SK-N-SH (cell line): ENCODE measurements at regions of chr2 and their contacts with region 1.

Region 1: GRCh38 chr2:74458132-74458925 is at the start of gene WBP1:
- DNase-seq: peak; percentile 94
- H3K4me3 ChIP-seq: peak within 1 kb of the TSS; percentile 73 to 98
- H3K27ac ChIP-seq: peak within 1 kb of the TSS; percentile 69 to 99; a peak in 3 of 4 replicates
- H3K4me1 ChIP-seq: peaks cover 14 to 35% of the 10 kb centered on the region in 2 experiments; a peak in 3 of 4 replicates
- H3K27me3 ChIP-seq: no peaks in the 10 kb centered on the region
- CTCF ChIP-seq: no peak
- EP300 ChIP-seq: no peak
- RAD21 ChIP-seq: no peak
- polyA plus RNA-seq, gene WBP1: 184 and 193 TPM in 2 replicates

Region 2: DNA sequence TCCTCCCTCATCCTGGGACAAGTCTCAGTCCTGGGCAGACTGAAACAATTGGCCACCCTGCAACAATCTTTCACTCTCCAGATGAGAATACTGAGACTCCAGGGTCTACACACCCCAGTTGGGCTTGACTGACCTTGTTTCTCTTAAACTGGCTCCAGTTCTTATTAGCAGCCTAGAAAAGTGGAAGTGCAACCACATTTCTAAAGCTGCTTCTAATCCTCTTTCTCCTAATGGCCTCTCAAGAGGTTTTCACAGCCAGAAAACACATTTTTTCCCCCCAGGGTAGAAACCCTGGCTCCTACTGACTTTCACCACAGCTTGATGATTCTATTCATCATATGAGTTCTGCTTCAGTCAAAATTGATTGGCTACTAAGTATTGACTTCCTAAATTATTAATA is 160.9 kb before region 1 on chr2:
- CTCF ChIA-PET with region 1: no interaction called
- POLR2A ChIA-PET with region 1: no interaction called
- DNase-seq: no peak
- H3K4me3 ChIP-seq: no peak overlapping the region
- H3K27ac ChIP-seq: no peak overlapping the region
- H3K4me1 ChIP-seq: no peaks in the 10 kb centered on the region
- H3K27me3 ChIP-seq: no peaks in the 10 kb centered on the region
- CTCF ChIP-seq: no peak
- EP300 ChIP-seq: no peak
- RAD21 ChIP-seq: no peak

Region 3: DNA sequence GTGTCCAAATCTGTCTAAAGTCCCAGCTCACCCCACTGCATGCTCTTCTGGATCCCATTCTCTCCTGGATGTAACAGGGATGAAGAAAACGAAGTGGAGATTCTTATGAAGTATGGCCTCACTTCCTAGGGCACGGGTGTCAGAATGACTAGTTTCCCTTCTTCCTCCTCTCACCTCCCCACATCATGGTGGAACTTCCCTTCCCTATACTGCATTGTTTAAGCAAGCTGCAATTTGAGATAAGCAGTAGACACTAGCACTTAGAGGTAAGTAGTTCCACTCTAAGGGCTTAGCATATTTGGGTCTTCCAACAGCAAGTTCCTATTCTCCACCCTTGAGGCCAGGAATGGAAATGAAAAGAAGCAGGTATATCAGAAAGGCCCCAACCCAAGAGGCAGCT is 144.8 kb before region 1 on chr2:
- CTCF ChIA-PET with region 1: no interaction called
- POLR2A ChIA-PET with region 1: no interaction called
- DNase-seq: no peak
- H3K4me3 ChIP-seq: no peak overlapping the region
- H3K27ac ChIP-seq: no peak overlapping the region
- H3K4me1 ChIP-seq: peaks cover 0 to 12% of the 10 kb centered on the region in 2 experiments; a peak in 2 of 4 replicates
- H3K27me3 ChIP-seq: no peaks in the 10 kb centered on the region
- CTCF ChIP-seq: no peak
- EP300 ChIP-seq: no peak
- RAD21 ChIP-seq: no peak

Region 4: DNA sequence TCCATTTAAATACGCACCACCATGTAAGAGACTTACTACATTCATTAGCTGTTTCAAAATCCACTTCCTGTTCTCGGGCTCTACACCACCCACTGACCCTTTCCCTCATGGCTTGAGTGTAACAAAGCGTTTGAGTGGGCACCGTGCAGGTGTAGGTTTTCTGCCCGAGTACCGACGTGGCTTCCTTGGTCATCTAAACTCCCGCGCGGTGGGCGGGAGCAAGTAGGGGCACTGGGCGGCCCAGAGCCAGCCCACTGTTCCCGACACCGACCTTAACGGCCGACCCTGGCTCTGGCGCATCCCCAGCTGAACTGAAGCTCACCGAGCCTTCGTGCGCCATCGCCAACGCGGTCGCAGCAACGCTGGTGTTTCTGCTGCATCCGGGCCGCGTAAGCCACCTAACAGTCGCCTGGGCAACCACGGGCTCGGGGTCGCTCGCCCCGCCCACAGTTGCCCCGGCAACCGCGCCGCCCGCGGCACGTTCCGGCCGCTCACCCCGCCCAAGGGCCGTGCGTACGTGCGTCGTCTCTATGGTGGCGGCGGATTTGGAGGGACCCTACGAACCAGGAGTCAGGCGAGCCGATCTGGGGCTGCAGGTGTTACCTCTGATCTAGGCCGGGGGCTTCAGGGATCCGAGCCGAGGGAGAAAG is 37.0 kb before region 1 on chr2 and contains the starts of genes C2orf81 and WDR54:
- CTCF ChIA-PET with region 1: interaction called, 5 read pairs
- POLR2A ChIA-PET with region 1: interaction called, 28 read pairs
- DNase-seq: peak; percentile 98
- H3K4me3 ChIP-seq: peak within 1 kb of the TSS; percentile 87
- H3K27ac ChIP-seq: peak within 1 kb of the TSS; percentile 82 to 94
- H3K4me1 ChIP-seq: peaks cover 0 to 16% of the 10 kb centered on the region in 2 experiments; a peak in 1 of 4 replicates
- H3K27me3 ChIP-seq: no peaks in the 10 kb centered on the region
- CTCF ChIP-seq: no peak
- EP300 ChIP-seq: no peak; a peak in 1 of 4 replicates
- RAD21 ChIP-seq: no peak
- polyA plus RNA-seq, gene C2orf81: 1.2 and 2.5 TPM in 2 replicates
- polyA plus RNA-seq, gene WDR54: 50.7 and 61.6 TPM in 2 replicates

Region 5: GRCh38 chr2:74440378-74441169 is 17.8 kb before region 1 on chr2:
- CTCF ChIA-PET with region 1: interaction called, 8 read pairs
- POLR2A ChIA-PET with region 1: interaction called, 27 read pairs
- DNase-seq: peak; percentile 99
- H3K4me3 ChIP-seq: peak overlapping the region; percentile 73 to 75
- H3K27ac ChIP-seq: peak overlapping the region; percentile 64 to 98
- H3K4me1 ChIP-seq: peaks cover 20 to 27% of the 10 kb centered on the region in 2 experiments; a peak in 3 of 4 replicates
- H3K27me3 ChIP-seq: no peaks in the 10 kb centered on the region
- CTCF ChIP-seq: no peak
- EP300 ChIP-seq: no peak
- RAD21 ChIP-seq: no peak

Region 6: DNA sequence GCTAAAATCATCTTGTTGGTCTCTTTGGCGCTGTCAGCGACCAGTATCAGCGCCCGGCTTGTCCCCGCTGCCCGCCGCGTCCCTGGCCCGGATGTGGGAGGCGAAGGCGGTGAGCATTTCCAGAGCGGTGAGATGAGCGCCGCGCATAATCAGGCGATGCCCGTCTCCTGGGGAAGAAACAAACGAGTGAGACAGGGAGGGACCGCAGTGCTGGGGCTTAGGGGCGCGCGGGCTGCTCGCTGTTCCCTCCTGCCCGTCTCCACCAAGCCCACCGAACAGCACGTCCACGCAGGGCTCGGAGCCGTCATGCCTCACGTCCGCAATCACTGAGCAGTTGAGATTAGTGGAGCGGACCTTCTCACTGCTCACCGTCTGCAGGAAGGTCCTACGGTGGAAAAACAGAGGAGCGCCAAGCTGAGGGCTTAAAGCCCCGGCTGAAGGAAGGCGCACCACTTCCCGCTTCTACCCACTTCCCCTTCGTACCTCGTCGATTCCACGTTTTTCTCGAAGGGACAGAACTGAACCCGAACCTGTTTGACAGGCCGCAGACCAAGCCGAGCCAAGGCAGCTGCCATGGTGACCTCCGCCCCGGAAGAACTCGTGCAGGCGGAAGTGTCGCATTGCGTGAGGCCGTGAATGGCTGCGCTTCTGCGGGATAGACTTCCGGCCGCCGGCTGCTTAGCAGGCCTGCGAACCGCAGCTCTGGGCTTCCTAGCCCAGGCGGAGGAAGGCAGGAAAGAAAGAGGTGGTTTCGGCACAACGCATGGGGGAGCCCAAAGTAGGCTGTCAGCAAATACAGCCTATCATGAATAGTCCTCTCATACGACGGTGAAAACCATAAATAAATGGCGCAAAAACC is 14.0 kb after region 1 on chr2 and contains the start of gene MRPL53:
- CTCF ChIA-PET with region 1: interaction called, 4 read pairs
- POLR2A ChIA-PET with region 1: interaction called, 60 read pairs
- DNase-seq: peak; percentile 85
- H3K4me3 ChIP-seq: peak within 1 kb of the TSS; percentile 68 to 74
- H3K27ac ChIP-seq: peak within 1 kb of the TSS; percentile 78 to 94
- H3K4me1 ChIP-seq: peaks cover 6 to 7% of the 10 kb centered on the region in 2 experiments; a peak in 2 of 4 replicates
- H3K27me3 ChIP-seq: no peaks in the 10 kb centered on the region
- CTCF ChIP-seq: no peak
- EP300 ChIP-seq: no peak
- RAD21 ChIP-seq: no peak
- polyA plus RNA-seq, gene MRPL53: 60.6 and 95.0 TPM in 2 replicates